ENCODE measurements at regions of chr13 and their contacts with region 1.

Region 1: DNA sequence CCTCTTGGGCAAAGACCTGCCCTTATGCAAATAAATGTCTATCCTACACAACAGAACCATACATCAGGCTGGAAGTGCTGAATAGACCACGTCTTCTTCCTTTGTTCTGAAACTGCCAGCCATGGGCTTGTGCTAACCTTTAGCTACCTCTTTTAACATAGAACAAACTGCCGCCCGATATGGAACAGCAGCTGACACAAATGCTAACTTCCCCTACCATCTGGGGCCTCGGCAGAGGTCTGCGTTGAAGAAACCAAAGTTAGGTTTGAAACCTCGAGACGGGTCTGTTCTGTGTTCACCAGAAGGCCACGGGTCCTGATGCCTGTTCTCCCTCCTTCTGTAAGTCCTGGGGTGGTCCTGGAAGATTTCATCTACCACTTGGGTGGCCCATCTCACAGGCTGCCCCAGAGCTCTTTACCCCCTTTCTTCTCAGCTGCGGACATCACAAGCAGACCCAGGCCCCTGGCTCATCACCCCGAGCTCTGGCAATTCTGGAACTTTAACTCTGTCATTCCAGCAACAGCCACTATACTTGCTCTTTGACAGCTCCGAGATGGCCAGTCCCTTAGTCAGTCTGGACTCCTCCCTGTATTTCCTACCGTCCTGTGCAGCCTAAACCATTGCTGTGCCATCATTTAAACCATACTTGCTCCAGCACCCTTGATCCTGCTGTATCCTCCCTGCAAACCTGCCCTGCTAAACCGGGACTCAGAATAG is 146.7 kb downstream of the USP12 start:
- DNase-seq: no peak
- ATAC-seq: no peak
- H3K4me3 ChIP-seq: no peak overlapping the region
- H3K27ac ChIP-seq: peak overlapping the region; percentile 98
- H3K4me1 ChIP-seq: peaks cover 47% of the 10 kb centered on the region
- H3K27me3 ChIP-seq: no peaks in the 10 kb centered on the region
- CTCF ChIP-seq: no peak

Region 2: DNA sequence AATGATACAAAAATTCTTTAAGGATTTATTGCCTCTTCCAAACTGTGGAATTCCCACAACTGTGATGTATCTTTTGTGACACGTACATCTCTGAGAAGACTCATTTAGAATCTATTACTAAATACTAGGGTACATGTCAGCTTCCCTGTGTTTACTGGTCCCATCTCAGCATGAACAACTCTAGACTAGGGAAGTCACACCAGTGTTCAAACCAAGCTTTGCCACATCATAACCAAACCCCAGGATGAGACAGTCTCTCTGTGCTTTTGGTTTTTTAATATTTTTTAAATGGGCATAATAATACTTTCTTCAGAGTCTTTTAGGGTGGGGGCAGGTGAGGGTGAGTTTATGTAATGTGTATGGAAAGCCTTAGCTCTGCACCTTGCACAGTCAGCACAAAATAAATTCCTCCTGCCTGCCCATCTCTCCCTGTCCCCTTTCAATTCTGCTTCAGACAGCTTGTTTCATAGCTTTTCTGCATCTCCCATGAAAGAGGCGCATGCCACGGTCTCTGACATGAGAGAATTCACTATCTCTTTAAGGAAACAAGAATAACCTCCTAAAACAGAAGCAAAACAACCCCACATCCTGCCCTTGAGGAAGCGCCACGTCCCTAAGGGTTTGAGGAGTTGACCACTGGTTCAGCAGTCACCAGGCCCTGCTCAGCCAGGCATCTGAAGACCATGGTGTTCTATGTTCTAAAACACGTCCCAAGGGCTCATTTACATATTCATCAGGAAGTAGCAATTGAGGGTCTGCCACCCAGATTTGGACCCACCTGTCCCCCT is 27.8 kb before region 1 on chr13:
- CTCF ChIA-PET with region 1: no interaction called
- POLR2A ChIA-PET with region 1: interaction called, 10 read pairs
- in situ Hi-C with region 1: no loop called
- intact Hi-C with region 1: no loop called
- DNase-seq: no peak
- ATAC-seq: no peak
- H3K4me3 ChIP-seq: no peak overlapping the region
- H3K27ac ChIP-seq: peak overlapping the region; percentile 72
- H3K4me1 ChIP-seq: peaks cover 21% of the 10 kb centered on the region
- H3K27me3 ChIP-seq: no peaks in the 10 kb centered on the region
- CTCF ChIP-seq: no peak

Region 3: DNA sequence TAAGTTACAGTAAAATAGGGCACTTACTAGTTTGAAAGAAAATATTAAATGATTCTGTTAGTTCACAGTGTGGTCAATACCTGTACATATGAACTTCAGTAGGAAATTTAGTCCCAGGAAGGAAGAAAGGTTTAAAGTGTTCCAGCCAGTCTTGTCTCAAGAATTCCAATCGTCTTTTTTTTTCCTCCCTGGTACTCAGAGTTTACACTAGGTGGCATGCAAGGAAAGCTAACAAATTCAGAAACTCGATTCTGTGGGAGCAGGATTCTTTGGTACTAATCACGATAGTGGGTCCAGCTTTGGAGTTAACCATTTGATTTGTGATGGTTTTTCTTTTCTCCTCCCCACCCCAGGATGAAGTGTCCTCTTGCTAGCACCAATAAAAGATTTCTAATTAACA is 640.4 kb after region 1 on chr13:
- CTCF ChIA-PET with region 1: no interaction called
- POLR2A ChIA-PET with region 1: no interaction called
- in situ Hi-C with region 1: no loop called
- intact Hi-C with region 1: no loop called
- DNase-seq: no peak
- ATAC-seq: no peak
- H3K4me3 ChIP-seq: no peak overlapping the region
- H3K27ac ChIP-seq: no peak overlapping the region
- H3K4me1 ChIP-seq: no peaks in the 10 kb centered on the region
- H3K27me3 ChIP-seq: no peaks in the 10 kb centered on the region
- CTCF ChIP-seq: no peak